ENCODE measurements at regions of chr5 and their contacts with region 1.

Region 1: GRCh38 chr5:113330533-113331208 is 104.1 kb downstream of the TSSK1B start:
- DNase-seq: peak; percentile 93
- H3K4me3 Mint-ChIP-seq: peak overlapping the region; percentile 44
- H3K27ac Mint-ChIP-seq: peak overlapping the region; percentile 17
- H3K4me1 Mint-ChIP-seq: peaks cover 20% of the 10 kb centered on the region
- H3K27me3 Mint-ChIP-seq: no peaks in the 10 kb centered on the region
- CTCF ChIP-seq: peak; percentile 63

Region 2: DNA sequence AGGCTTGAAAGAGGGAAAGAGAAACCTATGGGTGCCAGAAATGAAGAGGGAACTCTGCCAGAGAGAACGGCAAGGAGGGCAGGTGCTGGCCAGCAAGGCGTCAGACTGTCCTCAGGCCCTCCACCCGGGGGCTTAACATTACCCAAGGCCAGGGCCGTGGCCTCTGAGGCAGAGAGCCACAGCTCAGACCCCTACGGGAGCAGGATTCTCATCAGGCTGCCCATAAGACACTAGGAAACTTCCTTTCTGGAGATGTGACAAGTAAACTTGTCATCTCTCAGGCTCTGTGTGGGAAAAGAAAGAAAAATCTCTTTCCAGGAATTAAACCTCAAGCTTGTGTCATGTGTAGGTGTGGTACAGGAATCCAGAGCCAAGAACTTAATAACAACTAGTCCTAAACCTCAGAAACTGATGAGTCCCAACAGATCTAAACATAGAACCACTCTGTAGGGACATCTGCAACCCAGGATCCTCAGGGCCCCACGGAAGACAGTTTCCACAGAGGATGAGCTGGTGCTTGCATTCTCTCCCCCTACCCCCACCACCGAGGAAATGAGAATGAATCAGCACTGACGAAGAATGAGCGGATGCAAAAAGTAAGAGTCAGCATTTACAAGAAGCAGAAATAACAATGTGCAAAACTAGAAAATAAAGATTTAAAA is 279.8 kb before region 1 on chr5:
- CTCF ChIA-PET with region 1: no interaction called
- POLR2A ChIA-PET with region 1: no interaction called
- intact Hi-C with region 1: loop called (anchors 5 kb)
- DNase-seq: peak; percentile 72
- H3K4me3 Mint-ChIP-seq: peak overlapping the region; percentile 7
- H3K27ac Mint-ChIP-seq: peak overlapping the region; percentile 20
- H3K4me1 Mint-ChIP-seq: peaks cover 28% of the 10 kb centered on the region
- H3K27me3 Mint-ChIP-seq: no peaks in the 10 kb centered on the region
- CTCF ChIP-seq: no peak

Region 3: DNA sequence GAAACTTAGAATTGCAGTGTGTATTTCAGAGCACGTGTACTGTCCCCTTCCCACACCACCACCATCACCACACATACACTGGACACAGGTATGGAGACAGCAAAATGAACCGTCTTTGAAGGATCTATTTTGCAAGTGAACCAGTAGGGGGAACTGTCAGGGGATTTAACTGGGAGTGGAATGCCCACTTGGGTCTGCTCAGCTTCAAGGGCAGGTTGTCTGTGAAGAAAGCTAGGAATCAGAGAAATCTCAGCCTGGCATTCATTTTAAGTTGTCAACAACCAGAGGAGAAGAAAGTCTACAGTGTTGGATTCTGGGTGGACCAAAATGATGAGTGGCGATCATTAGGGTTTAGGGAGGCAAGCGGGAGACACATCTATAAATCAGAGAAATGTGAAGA is 207.1 kb before region 1 on chr5:
- CTCF ChIA-PET with region 1: no interaction called
- POLR2A ChIA-PET with region 1: interaction called, 8 read pairs
- intact Hi-C with region 1: loop called (anchors 1 kb)
- DNase-seq: peak; percentile 31
- H3K4me3 Mint-ChIP-seq: no peak overlapping the region
- H3K27ac Mint-ChIP-seq: no peak overlapping the region
- H3K4me1 Mint-ChIP-seq: no peaks in the 10 kb centered on the region
- H3K27me3 Mint-ChIP-seq: no peaks in the 10 kb centered on the region
- CTCF ChIP-seq: no peak

Region 4: GRCh38 chr5:113294311-113295110 is 36.2 kb before region 1 on chr5:
- CTCF ChIA-PET with region 1: interaction called, 3 read pairs
- POLR2A ChIA-PET with region 1: interaction called, 18 read pairs
- intact Hi-C with region 1: loop called (anchors 2 kb)
- DNase-seq: peak; percentile 83
- H3K4me3 Mint-ChIP-seq: peak overlapping the region; percentile 82
- H3K27ac Mint-ChIP-seq: peak overlapping the region; percentile 54
- H3K4me1 Mint-ChIP-seq: peaks cover 13% of the 10 kb centered on the region
- H3K27me3 Mint-ChIP-seq: no peaks in the 10 kb centered on the region
- CTCF ChIP-seq: no peak

Region 5: GRCh38 chr5:113344973-113345940 is 14.6 kb after region 1 on chr5:
- CTCF ChIA-PET with region 1: interaction called, 6 read pairs
- POLR2A ChIA-PET with region 1: interaction called, 13 read pairs
- intact Hi-C with region 1: no loop called
- DNase-seq: peak; percentile 92
- H3K4me3 Mint-ChIP-seq: peak overlapping the region; percentile 19
- H3K27ac Mint-ChIP-seq: peak overlapping the region; percentile 97
- H3K4me1 Mint-ChIP-seq: peaks cover 47% of the 10 kb centered on the region
- H3K27me3 Mint-ChIP-seq: no peaks in the 10 kb centered on the region
- CTCF ChIP-seq: no peak

Region 6: GRCh38 chr5:113524927-113525326 is 194.3 kb after region 1 on chr5:
- CTCF ChIA-PET with region 1: no interaction called
- POLR2A ChIA-PET with region 1: no interaction called
- intact Hi-C with region 1: no loop called
- DNase-seq: no peak
- H3K4me3 Mint-ChIP-seq: no peak overlapping the region
- H3K27ac Mint-ChIP-seq: no peak overlapping the region
- H3K4me1 Mint-ChIP-seq: peaks cover 3% of the 10 kb centered on the region
- H3K27me3 Mint-ChIP-seq: no peaks in the 10 kb centered on the region
- CTCF ChIP-seq: no peak

Region 7: DNA sequence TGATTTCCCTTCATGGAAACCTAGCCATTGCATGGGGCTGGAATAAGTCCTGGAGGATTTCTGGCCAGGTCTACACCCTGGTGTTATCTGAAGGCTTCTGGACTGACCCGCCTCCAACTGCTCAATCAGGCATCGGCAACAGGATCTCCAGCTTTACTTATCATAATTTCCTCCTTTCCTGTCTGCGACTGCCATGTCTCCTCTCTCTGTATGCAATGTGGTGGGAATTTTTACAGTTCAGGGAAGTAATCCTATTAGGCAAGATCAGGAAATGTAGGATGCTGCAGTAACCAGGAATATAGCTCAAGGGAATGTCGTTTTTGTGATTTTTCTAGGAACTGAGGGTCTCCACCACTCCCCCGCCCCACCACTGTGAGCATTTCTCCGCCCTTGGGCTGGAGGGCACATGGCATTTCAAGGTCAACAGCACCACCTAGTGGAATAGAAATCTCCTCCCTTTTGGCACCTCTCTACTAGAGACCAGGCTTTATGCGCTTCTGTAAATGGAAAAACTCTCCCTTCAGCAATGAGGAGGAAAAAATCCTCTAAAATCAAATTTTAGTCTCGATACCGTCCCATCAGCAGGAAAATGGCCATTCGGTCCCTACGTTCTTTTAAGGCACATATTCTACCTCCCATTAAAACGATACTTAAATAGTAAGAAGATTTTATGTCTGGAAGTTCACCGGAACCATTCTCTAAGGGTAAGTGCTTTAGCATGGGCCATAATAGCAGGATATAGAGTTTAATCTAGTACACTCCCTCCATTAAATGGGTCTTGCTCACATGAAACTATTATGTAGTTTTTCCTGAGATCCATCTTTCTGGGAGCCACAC is 275.8 kb after region 1 on chr5:
- CTCF ChIA-PET with region 1: no interaction called
- POLR2A ChIA-PET with region 1: no interaction called
- intact Hi-C with region 1: loop called (anchors 2 kb)
- DNase-seq: peak; percentile 70
- H3K4me3 Mint-ChIP-seq: no peak overlapping the region
- H3K27ac Mint-ChIP-seq: no peak overlapping the region
- H3K4me1 Mint-ChIP-seq: no peaks in the 10 kb centered on the region
- H3K27me3 Mint-ChIP-seq: no peaks in the 10 kb centered on the region
- CTCF ChIP-seq: peak; percentile 91

Measured in MCF 10A (cell line).